Lower leg skin (tissue), 4 donors: ENCODE measurements at regions of chr1 and their contacts with region 1.

Region 1: GRCh38 chr1:100613817-100614559 is 76.0 kb downstream of the GPR88 start:
- DNase-seq: no peak
- H3K4me3 ChIP-seq: no peak overlapping the region
- CTCF ChIP-seq: no peak
- POLR2A ChIP-seq: no peak

Region 2: GRCh38 chr1:101898137-101898536 is 1284.1 kb after region 1 on chr1:
- intact Hi-C with region 1: loop called (anchors 5 kb)
- DNase-seq: no peak
- H3K4me3 ChIP-seq: no peak overlapping the region
- CTCF ChIP-seq: no peak
- POLR2A ChIP-seq: no peak